Activated B cell treated with CpG ODN at 0.5 μM for 24 hours (primary cell): ENCODE measurements at regions of chr9 and their contacts with region 1.

Region 1: DNA sequence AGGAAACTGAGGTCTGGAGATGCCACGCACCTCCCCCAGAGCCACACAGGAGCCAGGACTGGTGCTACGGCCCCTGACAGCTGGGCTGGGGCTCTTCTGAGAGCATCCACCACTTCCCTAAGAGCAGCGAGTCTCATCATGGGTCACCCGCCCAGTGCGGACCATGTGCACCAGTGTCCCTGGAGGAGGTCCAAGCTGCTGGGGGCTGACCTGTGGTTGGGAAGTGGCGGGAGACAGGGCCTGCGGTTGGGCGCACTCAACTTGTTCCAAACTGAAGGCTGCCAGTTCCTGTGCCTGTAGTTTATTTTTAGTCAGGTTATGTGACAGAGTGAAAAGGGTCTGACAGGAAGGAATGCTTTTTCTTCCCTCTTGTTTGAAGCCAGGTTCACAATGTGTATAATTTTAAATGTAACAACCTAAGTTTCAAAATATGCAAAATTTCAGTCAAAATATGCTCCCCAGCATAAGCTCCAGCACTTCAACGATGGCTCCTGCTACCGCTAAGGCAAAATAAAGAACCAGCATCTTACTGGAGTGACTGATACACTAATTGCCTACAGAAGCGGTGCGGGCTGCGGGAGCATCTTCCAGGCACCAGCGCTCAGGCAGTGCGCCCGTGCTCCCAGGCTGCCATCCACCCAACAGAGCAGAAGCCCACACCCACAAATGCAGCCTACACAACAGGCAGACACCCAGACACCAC is 14.8 kb downstream of the BARHL1 start:
- DNase-seq: no peak
- ATAC-seq: no peak
- H3K4me3 Mint-ChIP-seq: no peak overlapping the region
- H3K27ac Mint-ChIP-seq: no peak overlapping the region
- H3K4me1 Mint-ChIP-seq: no peaks in the 10 kb centered on the region
- H3K27me3 Mint-ChIP-seq: peaks cover 9% of the 10 kb centered on the region
- CTCF ChIP-seq: no peak

Region 2: DNA sequence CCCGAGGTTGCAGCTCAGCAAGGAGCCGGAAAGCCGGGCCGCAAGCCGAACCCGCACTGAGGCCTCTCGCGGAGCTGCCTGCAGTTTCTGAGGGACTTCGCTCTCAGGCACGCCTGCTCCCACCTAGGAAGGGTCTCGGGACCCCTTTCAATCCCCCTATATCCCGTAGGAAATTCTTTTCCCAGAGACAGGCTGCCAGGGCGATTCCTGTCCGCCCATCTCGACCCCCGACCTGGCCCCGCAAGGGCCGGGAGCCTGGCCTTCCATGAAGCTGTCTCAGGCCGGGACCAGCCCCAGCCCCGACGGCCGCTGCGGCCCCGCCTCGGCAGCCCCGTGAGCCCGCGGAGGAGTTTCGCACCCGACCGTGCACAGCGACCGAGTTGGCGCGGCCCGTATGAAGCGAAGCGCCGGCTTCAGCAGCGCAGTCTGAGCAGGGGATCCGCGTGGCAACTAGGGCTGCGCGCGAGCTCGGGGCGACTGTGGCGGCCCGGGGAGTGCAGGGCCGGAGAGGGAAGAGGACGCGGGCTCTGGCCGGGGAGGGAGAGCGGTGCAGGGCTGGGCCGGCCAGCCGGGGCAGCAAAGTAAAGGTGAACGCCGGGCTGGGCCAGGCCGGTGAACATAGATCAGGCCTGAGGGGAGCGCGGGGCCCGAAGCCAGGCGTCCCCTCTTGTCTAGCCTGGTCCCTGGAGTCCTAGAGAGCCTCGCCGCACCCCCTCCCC is 1933.8 kb before region 1 on chr9:
- CTCF ChIA-PET with region 1: no interaction called
- POLR2A ChIA-PET with region 1: no interaction called
- intact Hi-C with region 1: loop called (anchors 10 kb)
- DNase-seq: no peak
- ATAC-seq: no peak
- H3K4me3 Mint-ChIP-seq: peak overlapping the region; percentile 58
- H3K27ac Mint-ChIP-seq: no peak overlapping the region
- H3K4me1 Mint-ChIP-seq: peaks cover 42% of the 10 kb centered on the region
- H3K27me3 Mint-ChIP-seq: peaks cover 51% of the 10 kb centered on the region
- CTCF ChIP-seq: no peak